IMR-90 (cell line): ENCODE measurements at regions of chr12 and their contacts with region 1.

Region 1: GRCh38 chr12:122668268-122668667 is 34.9 kb downstream of the HCAR2 start:
- DNase-seq: no peak
- ATAC-seq: no peak
- H3K4me3 ChIP-seq: no peak overlapping the region
- H3K27ac ChIP-seq: no peak overlapping the region
- H3K4me1 ChIP-seq: peaks cover 3% of the 10 kb centered on the region
- H3K27me3 ChIP-seq: no peaks in the 10 kb centered on the region
- CTCF ChIP-seq: no peak
- POLR2A ChIP-seq: no peak
- RAD21 ChIP-seq: no peak

Region 2: DNA sequence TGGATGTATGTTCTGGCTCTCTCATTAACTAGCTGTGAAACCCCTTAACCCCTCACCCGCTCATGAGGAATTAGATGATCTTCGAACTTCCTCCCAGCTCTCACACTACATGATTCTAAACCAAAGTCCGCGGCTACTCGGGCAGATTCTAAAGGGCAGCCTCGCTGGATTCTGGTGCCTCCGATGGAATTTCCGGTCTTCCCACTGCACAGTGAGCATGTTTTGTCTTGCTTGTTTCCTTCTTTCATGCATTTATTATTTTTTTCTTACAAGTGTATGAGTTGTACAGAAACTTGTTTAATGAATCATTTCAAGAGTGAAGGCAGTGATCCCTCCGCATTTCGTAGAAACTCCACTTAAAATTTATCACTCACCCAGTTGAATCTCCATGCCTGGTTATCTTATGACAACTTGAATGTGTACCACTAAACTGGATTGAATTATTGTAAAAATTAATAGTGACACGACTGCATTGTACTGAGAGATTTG is 52.8 kb after region 1 on chr12:
- CTCF ChIA-PET with region 1: no interaction called
- POLR2A ChIA-PET with region 1: interaction called, 23 read pairs
- dilution Hi-C with region 1: no loop called
- in situ Hi-C with region 1: no loop called
- intact Hi-C with region 1: no loop called
- DNase-seq: no peak
- ATAC-seq: no peak
- H3K4me3 ChIP-seq: no peak overlapping the region
- H3K27ac ChIP-seq: no peak overlapping the region
- H3K4me1 ChIP-seq: peaks cover 2% of the 10 kb centered on the region; the same call in 1 of the 2 replicates
- H3K27me3 ChIP-seq: peaks cover 5% of the 10 kb centered on the region
- CTCF ChIP-seq: no peak
- POLR2A ChIP-seq: no peak
- RAD21 ChIP-seq: no peak